ENCODE measurements at regions of chr11 and their contacts with region 1.

Region 1: GRCh38 chr11:134050541-134051383 is 18.1 kb upstream of the JAM3 start:
- DNase-seq: peak; percentile 63 to 80 (median 65)
- H3K4me3 ChIP-seq: no peak overlapping the region
- H3K4me3 Mint-ChIP-seq: peak overlapping the region in 1 of 7 donors; percentile 32
- H3K27ac ChIP-seq: no peak overlapping the region
- H3K27ac Mint-ChIP-seq: peak overlapping the region in 2 of 8 donors; percentile 24 to 76
- H3K4me1 ChIP-seq: peaks cover 6% of the 10 kb centered on the region
- H3K4me1 Mint-ChIP-seq: peaks cover 2 to 6% (median 5%) of the 10 kb centered on the region in 3 donors
- H3K27me3 ChIP-seq: peaks cover 4% of the 10 kb centered on the region
- H3K27me3 Mint-ChIP-seq: peaks cover 30 to 42% of the 10 kb centered on the region in 2 donors

Region 2: DNA sequence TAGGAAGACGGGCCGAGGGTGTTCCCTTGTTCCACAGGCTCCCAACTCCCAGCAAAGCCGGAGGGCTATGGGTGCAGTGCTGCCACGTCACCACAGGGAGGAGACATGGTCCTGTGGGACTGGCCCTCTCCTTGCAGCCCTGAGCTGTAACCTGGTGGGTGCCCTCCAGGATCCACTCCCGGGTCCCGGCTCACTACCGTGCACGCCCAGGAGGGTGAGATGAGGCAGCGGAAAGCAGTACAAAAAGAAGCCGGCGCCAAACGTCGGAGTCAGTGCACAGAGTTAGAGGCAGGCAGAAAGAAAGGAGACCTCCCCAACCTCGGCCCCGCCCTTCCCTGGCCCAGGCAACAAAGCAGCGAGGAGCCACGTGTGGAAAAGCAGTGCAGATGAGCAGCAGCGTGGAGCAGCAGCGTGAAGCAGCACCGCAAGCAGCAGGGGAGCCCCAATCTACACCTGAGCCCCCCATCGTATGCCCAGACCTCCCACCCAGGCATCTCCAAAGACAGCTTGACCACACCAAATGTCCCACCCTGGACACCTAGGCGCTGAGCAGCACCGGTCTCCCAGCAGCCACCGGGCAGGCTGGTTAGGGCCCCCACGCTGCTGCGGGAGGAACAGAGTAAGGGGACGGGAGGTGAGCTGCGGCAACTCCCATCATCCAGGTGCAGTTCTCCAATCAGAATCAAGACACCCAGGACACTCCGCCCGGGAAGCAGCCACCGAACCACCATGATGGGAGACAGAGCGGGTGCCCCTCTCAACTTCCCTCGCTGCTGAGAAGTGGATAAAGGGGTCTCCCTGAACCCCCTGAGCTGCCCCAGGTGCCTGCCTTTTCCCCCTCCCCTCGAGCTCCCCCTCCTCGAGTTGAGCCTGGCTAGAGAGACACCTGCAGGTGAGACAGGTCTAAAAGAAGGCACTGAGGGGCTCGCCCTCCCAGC is 122.8 kb before region 1 on chr11:
- CTCF ChIA-PET with region 1: interaction called, 17 read pairs
- POLR2A ChIA-PET with region 1: no interaction called
- DNase-seq: peak; percentile 45 to 73 (median 54)
- H3K4me3 ChIP-seq: peak overlapping the region; percentile 59
- H3K4me3 Mint-ChIP-seq: peak overlapping the region; percentile 18 to 94 (median 88)
- H3K27ac ChIP-seq: no peak overlapping the region
- H3K27ac Mint-ChIP-seq: peak overlapping the region in 6 of 8 donors; percentile 27 to 97 (median 90)
- H3K4me1 ChIP-seq: peaks cover 26% of the 10 kb centered on the region
- H3K4me1 Mint-ChIP-seq: peaks cover 16 to 20% (median 20%) of the 10 kb centered on the region in 3 donors
- H3K27me3 ChIP-seq: no peaks in the 10 kb centered on the region
- H3K27me3 Mint-ChIP-seq: no peaks in the 10 kb centered on the region

Region 3: GRCh38 chr11:134026655-134027343 is 24.0 kb before region 1 on chr11:
- CTCF ChIA-PET with region 1: interaction called, 21 read pairs
- POLR2A ChIA-PET with region 1: interaction called, 5 read pairs
- DNase-seq: peak in 1 of 5 donors; percentile 31
- H3K4me3 ChIP-seq: no peak overlapping the region
- H3K4me3 Mint-ChIP-seq: peak overlapping the region in 2 of 7 donors; percentile 37 to 54
- H3K27ac ChIP-seq: no peak overlapping the region
- H3K27ac Mint-ChIP-seq: peak overlapping the region; percentile 27 to 88 (median 68)
- H3K4me1 ChIP-seq: peaks cover 28% of the 10 kb centered on the region
- H3K4me1 Mint-ChIP-seq: peaks cover 35 to 41% (median 36%) of the 10 kb centered on the region in 3 donors
- H3K27me3 ChIP-seq: no peaks in the 10 kb centered on the region
- H3K27me3 Mint-ChIP-seq: peaks cover 5 to 6% of the 10 kb centered on the region in 2 donors

Region 4: DNA sequence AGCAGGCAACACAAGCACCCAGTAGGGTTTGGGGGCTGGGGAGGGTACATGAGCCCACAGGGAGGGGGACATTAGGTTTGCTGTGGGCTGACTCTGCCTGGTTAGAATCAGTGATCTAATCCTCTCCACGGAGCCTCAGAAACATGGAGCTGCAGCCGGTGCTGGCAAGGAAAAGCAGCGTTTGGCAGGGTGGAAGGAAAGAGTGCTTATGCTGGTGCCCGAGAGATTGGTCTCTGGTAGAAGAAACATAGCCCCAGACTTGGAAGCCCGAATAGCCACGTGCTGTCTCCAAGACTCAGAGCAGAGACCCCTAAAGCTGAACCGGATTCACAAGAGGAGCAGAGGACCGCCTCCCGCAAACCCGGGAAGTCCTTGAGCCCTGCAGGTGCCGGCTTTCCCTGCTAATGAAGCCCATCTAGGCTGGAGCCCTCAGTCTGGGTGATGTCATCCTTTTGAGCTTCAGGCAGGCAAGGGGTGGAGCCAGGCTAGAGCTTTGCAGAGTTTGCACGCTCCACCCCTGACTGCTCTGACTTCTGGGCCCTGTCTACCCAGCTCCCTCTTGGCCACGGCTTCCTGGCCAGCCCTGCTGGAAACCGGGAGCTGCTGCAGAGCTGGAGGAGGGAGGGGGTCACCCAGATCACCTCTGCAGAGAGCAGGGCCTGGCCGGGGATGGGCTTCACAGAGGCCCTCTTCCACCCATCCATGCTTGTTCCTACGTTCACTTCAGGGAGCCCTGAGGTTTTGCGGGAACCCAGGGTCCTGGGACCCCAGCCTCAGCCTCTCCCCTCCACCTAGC is 16.9 kb before region 1 on chr11:
- CTCF ChIA-PET with region 1: interaction called, 31 read pairs
- POLR2A ChIA-PET with region 1: interaction called, 5 read pairs
- DNase-seq: peak; percentile 32 to 76 (median 43)
- H3K4me3 ChIP-seq: peak overlapping the region; percentile 52
- H3K4me3 Mint-ChIP-seq: peak overlapping the region; percentile 53 to 80 (median 70)
- H3K27ac ChIP-seq: no peak overlapping the region
- H3K27ac Mint-ChIP-seq: peak overlapping the region; percentile 46 to 95 (median 84)
- H3K4me1 ChIP-seq: peaks cover 49% of the 10 kb centered on the region
- H3K4me1 Mint-ChIP-seq: peaks cover 59 to 73% (median 62%) of the 10 kb centered on the region in 3 donors
- H3K27me3 ChIP-seq: no peaks in the 10 kb centered on the region
- H3K27me3 Mint-ChIP-seq: no peaks in the 10 kb centered on the region

Region 5: DNA sequence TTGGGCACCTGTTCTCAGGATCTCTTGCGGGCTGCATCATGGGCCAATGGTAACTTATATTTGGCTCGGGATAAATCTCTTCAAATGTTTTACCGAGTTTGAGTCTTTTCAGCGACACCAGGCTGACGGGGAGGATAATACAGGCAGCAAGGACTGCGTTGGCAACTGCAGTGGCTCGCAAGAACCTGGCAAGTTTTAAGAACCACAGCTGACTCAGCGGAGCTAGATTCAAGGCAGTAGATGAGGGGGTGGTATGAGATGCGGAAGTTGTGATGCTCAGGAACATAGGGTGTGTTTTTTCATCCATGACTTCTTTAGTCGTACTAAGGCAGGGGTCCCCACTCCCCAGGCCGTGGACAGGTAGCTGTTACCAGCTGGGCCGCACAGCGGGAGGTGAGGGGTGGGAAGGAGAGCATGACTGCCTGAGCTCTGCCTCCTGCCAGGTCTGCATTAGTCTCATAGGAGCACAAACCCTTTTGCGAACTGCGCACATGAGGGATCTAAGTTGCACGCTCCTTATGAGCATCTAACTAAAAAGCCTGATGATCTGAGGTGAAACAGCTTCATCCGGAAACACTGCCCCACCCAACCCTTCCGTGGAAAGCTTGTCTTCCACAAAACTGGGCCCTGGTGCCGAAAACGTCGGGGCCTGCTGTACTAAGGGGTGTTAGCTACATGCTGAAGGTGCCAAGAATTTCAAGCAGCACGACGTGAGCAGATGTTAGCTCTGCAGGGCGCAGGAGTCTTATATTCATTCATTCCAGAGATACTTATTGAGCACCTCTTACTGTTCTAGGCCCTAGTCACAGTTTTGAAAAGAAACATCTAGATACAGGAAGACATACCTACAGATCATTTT is 11.7 kb after region 1 on chr11:
- CTCF ChIA-PET with region 1: interaction called, 24 read pairs
- POLR2A ChIA-PET with region 1: no interaction called
- DNase-seq: no peak
- H3K4me3 ChIP-seq: no peak overlapping the region
- H3K4me3 Mint-ChIP-seq: no peak overlapping the region
- H3K27ac ChIP-seq: no peak overlapping the region
- H3K27ac Mint-ChIP-seq: no peak overlapping the region
- H3K4me1 ChIP-seq: no peaks in the 10 kb centered on the region
- H3K4me1 Mint-ChIP-seq: peaks cover 8 to 10% (median 9%) of the 10 kb centered on the region in 3 donors
- H3K27me3 ChIP-seq: peaks cover 7% of the 10 kb centered on the region
- H3K27me3 Mint-ChIP-seq: peaks cover 33 to 56% of the 10 kb centered on the region in 2 donors

Region 6: DNA sequence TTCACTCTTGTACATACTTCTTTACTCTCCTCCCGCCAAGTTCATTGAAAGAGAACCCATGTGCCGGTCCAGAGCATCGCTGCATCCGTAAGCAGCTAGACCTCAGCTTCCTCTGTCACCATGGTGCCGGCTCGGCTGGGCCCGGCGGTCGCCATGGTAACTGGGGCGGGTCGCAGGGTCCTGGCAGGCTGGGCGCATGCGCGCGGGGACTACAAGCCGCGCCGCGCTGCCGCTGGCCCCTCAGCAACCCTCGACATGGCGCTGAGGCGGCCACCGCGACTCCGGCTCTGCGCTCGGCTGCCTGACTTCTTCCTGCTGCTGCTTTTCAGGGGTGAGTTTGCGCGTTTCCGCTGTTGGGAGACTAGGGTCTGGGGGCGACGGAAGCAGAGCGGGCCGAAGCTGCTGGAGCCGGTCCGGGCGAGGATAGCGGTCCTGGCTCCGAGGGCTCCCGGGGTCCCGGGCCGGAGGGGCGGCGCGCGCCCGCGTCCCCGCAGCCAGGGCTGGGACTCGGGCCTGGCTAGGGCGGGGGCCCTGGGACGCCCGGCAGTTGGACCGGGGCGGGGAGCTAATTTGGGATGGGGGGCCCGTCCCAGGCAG is 18.2 kb after region 1 on chr11 and contains the start of gene JAM3:
- CTCF ChIA-PET with region 1: interaction called, 24 read pairs
- POLR2A ChIA-PET with region 1: no interaction called
- DNase-seq: peak; percentile 93 to 99 (median 97)
- H3K4me3 ChIP-seq: peak within 1 kb of the TSS; percentile 50
- H3K4me3 Mint-ChIP-seq: peak within 1 kb of the TSS; percentile 89 to 98 (median 92)
- H3K27ac ChIP-seq: no peak within 1 kb of the TSS
- H3K27ac Mint-ChIP-seq: peak within 1 kb of the TSS; percentile 86 to 96 (median 92)
- H3K4me1 ChIP-seq: peaks cover 6% of the 10 kb centered on the region
- H3K4me1 Mint-ChIP-seq: peaks cover 9 to 20% (median 13%) of the 10 kb centered on the region in 3 donors
- H3K27me3 ChIP-seq: no peaks in the 10 kb centered on the region
- H3K27me3 Mint-ChIP-seq: peaks cover 3 to 4% of the 10 kb centered on the region in 2 donors
- total RNA-seq, gene JAM3: 12.5 to 14.8 TPM

Region 7: DNA sequence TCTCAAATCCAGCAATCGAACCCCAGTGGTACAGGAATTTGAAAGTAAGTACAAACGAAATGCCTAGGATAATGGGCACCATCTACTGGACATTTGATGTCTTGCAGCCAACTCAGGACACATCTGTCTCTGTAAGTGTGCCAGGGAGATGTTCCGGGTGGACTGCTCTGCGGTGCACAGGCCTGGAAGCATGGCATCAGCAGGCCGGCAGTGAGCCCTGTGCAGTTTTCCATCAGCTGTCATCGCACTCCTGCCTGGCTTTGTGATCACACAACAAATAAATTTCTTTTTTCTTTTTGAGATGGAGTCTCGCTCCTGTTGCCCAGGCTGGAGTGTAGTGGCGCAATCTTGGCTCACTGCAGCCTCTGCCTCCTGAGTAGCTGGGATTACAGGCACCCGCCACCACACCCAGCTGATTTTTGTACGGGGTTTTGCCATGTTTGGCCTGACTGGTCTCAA is 89.1 kb after region 1 on chr11:
- CTCF ChIA-PET with region 1: interaction called, 16 read pairs
- POLR2A ChIA-PET with region 1: no interaction called
- DNase-seq: peak in 4 of 5 donors; percentile 20 to 56 (median 45)
- H3K4me3 ChIP-seq: no peak overlapping the region
- H3K4me3 Mint-ChIP-seq: no peak overlapping the region
- H3K27ac ChIP-seq: no peak overlapping the region
- H3K27ac Mint-ChIP-seq: no peak overlapping the region
- H3K4me1 ChIP-seq: no peaks in the 10 kb centered on the region
- H3K4me1 Mint-ChIP-seq: peaks cover 1 to 15% (median 8%) of the 10 kb centered on the region in 3 donors
- H3K27me3 ChIP-seq: no peaks in the 10 kb centered on the region
- H3K27me3 Mint-ChIP-seq: no peaks in the 10 kb centered on the region